ENCODE measurements at regions of chr16 and their contacts with region 1.

Region 1: DNA sequence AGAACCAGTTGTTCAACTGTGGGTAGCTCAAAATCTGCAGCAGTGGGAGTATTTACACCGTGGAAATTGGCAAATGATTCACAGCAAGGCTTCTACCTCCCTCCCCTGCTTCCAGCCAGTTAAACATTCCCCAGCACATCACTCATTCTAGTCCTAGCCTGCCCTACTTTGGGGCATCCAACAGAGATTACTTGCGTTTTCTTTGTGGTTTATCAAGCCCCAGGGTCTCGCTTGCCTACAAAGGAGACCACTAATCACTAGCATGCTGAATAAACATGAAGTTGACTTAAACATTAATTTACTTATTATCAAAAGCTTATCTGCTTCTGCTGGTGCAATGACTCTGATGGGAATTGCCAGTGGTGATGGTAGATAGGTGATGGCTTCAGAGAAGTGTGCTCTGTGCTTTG is 94.5 kb downstream of the MARF1 start:
- DNase-seq: no peak
- H3K4me3 ChIP-seq: no peak overlapping the region
- H3K27ac ChIP-seq: no peak overlapping the region
- H3K4me1 ChIP-seq: peaks cover 0 to 25% (median 9%) of the 10 kb centered on the region in 4 donors
- H3K27me3 ChIP-seq: no peaks in the 10 kb centered on the region
- CTCF ChIP-seq: no peak

Region 2: GRCh38 chr16:15427648-15428239 is 120.7 kb before region 1 on chr16:
- intact Hi-C with region 1: loop called (anchors 2 kb)
- DNase-seq: peak; percentile 78 to 79
- H3K4me3 ChIP-seq: peak overlapping the region; percentile 11 to 24
- H3K27ac ChIP-seq: peak overlapping the region in 1 of 2 donors; percentile 27
- H3K4me1 ChIP-seq: peaks cover 0 to 17% (median 5%) of the 10 kb centered on the region in 4 donors
- H3K27me3 ChIP-seq: no peaks in the 10 kb centered on the region
- CTCF ChIP-seq: peak; percentile 62 to 77

Measured in tibial artery (tissue), 4 donors.